Breast epithelium (tissue), 4 donors: ENCODE measurements at regions of chr12 and their contacts with region 1.

Region 1: DNA sequence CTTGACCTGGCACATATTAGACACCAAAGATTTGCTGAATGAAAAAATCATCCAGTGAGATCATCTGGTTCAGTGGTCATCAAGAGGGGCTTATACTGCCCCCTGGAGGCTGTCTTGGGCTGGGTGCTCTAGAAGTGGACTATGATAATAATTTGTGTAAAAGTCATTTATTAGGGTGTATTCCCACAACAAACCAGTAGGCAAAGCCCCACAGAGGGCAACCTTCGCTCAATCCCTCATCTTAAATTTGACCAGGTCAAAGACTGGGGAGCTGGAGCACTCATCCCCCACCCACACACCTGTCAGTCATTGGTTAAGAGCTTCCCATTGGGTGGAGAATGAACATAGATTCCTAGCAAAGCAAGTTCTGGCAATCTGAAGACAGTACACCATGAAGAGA is 20.0 kb upstream of the FICD start:
- DNase-seq: no peak
- H3K4me3 ChIP-seq: no peak overlapping the region
- H3K27ac ChIP-seq: no peak overlapping the region
- H3K4me1 ChIP-seq: no peaks in the 10 kb centered on the region
- H3K27me3 ChIP-seq: no peaks in the 10 kb centered on the region
- CTCF ChIP-seq: no peak
- POLR2A ChIP-seq: no peak

Region 2: GRCh38 chr12:108320507-108321293 is 174.4 kb before region 1 on chr12:
- intact Hi-C with region 1: no loop called
- DNase-seq: no peak
- H3K4me3 ChIP-seq: no peak overlapping the region
- H3K27ac ChIP-seq: no peak overlapping the region
- H3K4me1 ChIP-seq: no peaks in the 10 kb centered on the region
- H3K27me3 ChIP-seq: no peaks in the 10 kb centered on the region
- CTCF ChIP-seq: no peak
- POLR2A ChIP-seq: no peak

Region 3: GRCh38 chr12:110088936-110089335 is 1593.9 kb after region 1 on chr12:
- intact Hi-C with region 1: loop called (anchors 5 kb)
- DNase-seq: no peak
- H3K4me3 ChIP-seq: no peak overlapping the region
- H3K27ac ChIP-seq: no peak overlapping the region
- H3K4me1 ChIP-seq: no peaks in the 10 kb centered on the region
- H3K27me3 ChIP-seq: no peaks in the 10 kb centered on the region
- CTCF ChIP-seq: no peak
- POLR2A ChIP-seq: no peak